Activated CD8-positive, alpha-beta memory T cell treated with anti-CD3 and anti-CD28 coated beads, Interleukin-2, amount 10 ng/mL, durations not matched to agents 7 days and 5 days (primary cell): ENCODE measurements at regions of chr1 and their contacts with region 1.

Region 1: DNA sequence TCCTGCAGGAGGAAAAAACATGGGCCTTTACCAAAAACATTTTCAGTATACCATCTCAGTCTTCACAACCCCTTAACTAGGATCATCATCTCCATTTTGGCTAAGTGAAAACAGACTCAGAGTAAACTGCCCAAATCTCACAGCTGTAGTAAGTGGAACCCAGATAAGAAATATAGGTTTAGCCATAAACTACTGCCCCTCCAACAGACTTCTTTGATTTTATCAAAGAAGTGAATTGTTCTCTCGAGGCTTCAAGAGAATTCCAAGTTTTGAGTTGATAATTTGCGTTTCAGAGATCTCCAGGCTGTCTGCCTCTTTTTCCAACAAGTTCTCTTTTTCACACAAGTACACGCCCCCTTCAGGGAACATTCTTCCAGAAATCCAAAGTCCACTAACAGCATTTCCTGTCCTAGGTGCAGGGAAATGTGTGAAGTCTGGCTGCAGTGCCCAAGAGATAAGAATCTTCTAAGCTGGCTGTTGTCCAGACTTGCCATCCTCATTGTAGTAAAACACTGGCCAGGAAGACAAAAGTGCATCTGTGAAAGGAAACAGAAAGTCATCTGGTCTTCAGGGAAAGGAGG is 30.8 kb downstream of the RNF19B start:
- DNase-seq: no peak
- ATAC-seq: no peak
- H3K4me3 Mint-ChIP-seq: no peak overlapping the region
- H3K27ac Mint-ChIP-seq: peak overlapping the region; percentile 32
- H3K4me1 Mint-ChIP-seq: peaks cover 34% of the 10 kb centered on the region
- H3K27me3 Mint-ChIP-seq: no peaks in the 10 kb centered on the region

Region 2: DNA sequence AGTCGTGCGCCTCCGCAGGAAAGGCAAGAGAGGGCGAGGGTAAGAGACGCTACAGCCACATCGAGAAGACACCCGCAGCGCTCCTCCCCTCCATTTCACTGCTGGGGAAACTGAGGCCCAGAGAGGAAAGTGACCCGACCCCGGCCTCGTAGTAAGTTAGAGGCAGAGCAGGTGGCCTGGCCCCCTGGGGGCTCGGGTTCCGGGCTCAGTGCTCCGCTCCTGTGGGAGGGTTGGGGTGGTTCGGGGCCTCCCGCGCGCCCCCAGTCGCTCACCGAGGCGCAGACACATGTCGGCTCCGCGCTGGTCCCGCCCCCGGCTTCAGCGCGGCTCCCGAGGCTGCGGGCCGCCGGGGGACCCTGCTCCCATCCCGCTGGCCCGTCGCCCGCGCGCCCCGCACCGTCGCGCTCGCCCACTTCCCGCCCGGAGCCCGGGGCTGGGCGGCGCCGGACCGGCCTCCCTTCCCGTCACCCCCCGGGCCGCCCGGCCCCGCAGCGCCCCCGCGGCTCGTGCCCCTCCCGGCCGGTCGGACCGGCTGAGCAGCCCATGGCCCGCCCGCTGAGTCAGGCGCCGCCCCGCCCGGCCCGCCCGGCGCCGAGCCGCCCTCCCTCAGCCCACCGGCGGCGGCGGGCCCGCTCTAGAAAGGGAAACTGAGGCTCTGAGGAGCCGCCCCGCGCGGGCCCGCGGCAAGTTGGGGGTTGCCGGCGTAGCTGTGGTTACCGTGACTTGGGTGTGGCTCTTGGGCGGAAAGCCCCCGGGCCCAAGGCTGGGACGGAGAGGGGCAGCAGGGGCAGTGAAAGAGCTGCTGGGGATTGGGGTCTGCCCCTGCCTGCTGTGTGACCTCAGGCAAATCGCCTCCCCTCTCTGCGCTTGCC is 32.6 kb before region 1 on chr1 and contains the start of gene TMEM54:
- CTCF ChIA-PET with region 1: no interaction called
- DNase-seq: no peak
- ATAC-seq: peak; percentile 64
- H3K4me3 Mint-ChIP-seq: peak within 1 kb of the TSS; percentile 39
- H3K27ac Mint-ChIP-seq: no peak within 1 kb of the TSS
- H3K4me1 Mint-ChIP-seq: peaks cover 8% of the 10 kb centered on the region
- H3K27me3 Mint-ChIP-seq: peaks cover 68% of the 10 kb centered on the region
- total RNA-seq, gene TMEM54: not detected

Region 3: DNA sequence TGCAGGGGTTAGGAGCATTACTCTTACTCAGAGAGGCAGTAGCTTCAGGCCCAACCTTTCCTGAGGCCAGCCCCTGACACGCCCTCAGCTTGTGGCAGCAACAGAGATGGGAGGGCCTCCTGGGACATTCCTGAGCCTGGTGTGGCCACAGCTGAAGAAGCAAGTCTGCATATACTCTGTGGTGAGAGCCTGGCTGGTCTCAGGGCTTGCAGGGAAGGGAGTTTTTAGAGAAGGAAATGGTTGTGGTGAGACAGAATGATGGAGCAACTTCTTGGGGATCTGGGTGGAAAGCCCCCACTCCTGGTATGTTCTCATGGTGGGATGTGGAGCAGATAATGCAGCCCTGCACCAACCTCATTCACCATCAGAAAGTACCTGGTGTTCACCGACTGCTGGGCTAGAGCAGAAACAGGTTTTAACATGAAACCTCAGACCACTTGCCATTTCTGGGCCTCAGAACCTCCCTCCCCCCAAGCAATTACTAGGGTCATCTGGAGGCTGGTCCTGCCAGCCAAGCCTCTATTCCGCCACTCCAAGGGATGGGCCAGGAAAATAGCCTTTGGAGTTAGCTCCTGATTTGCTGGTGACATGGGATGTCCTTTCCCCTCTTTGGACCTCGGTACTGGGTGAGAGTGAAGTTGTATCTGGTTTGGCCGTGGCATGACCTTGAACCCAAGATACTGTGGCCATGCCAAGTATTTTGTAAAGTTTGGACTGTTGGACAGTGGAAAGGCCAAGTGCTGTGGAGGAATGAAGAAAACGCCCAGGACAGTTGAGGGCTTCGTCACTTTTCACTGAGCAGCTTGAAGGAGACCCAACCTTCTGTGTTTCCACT is 58.9 kb after region 1 on chr1:
- CTCF ChIA-PET with region 1: interaction called, 15 read pairs
- DNase-seq: peak; percentile 85
- ATAC-seq: peak; percentile 73
- H3K4me3 Mint-ChIP-seq: no peak overlapping the region
- H3K27ac Mint-ChIP-seq: peak overlapping the region; percentile 85
- H3K4me1 Mint-ChIP-seq: peaks cover 57% of the 10 kb centered on the region
- H3K27me3 Mint-ChIP-seq: no peaks in the 10 kb centered on the region

Region 4: GRCh38 chr1:33007190-33008050 is 73.6 kb after region 1 on chr1:
- CTCF ChIA-PET with region 1: interaction called, 29 read pairs
- DNase-seq: no peak
- ATAC-seq: peak; percentile 55
- H3K4me3 Mint-ChIP-seq: no peak overlapping the region
- H3K27ac Mint-ChIP-seq: no peak overlapping the region
- H3K4me1 Mint-ChIP-seq: peaks cover 13% of the 10 kb centered on the region
- H3K27me3 Mint-ChIP-seq: no peaks in the 10 kb centered on the region

Region 5: DNA sequence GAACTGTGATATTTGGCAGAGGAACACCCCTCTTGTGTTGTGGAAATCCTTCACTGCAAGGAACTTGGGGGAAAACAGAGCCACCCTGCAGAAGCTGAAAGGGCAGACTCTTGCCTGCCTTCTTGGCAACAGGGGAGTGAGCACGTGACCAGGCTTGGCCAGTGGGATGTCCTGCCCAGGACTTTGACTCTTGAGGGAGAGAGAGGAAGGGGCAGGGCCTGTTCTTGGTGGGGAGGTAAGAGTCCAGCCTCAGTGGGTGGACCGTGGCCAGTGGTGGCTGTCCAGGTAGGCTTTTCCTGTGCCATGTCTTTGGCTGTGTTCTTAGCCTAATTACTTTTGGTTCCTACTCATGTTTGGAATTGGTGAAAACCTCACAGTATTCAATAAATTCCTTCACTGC is 111.4 kb after region 1 on chr1:
- CTCF ChIA-PET with region 1: interaction called, 11 read pairs
- DNase-seq: peak; percentile 47
- ATAC-seq: peak; percentile 48
- H3K4me3 Mint-ChIP-seq: no peak overlapping the region
- H3K27ac Mint-ChIP-seq: peak overlapping the region; percentile 70
- H3K4me1 Mint-ChIP-seq: peaks cover 29% of the 10 kb centered on the region
- H3K27me3 Mint-ChIP-seq: no peaks in the 10 kb centered on the region

Region 6: DNA sequence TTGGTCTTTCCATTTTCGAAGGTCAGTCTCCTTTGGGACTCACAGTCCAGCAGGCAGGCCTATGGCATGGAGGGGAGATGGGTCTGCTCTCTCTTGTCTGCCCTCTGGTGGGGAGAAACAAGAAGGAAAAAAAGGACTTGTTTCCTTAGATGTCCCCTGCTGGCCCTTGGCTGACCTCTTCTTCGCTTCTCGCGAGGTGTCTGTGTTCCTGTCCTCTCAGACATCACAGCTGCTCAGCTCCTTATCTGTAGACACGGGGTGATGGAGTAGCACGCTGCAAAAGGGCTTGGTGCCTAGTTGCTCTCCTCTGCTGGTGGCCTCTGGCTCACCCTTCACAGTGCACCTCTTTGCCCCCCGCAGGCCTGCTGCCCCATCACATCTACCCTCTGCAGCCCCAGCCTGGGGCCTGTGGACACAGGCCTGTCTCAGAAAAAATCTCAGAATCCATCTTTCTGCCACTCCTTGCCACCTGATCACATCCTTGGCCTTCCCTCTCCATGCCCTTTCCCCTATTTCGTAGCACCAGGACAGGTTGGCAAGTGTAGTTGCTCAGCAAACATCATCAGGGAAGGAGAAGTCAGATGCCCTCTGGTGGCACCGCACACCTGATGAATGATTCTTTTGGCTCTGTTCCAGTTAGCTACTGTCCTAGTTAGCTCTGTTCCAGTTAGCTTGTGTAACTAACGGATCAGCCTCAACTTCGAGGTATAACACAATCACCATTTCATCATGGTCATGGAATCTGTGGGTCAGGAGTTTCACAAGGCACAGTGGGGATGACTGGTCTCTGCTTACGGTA is 121.6 kb after region 1 on chr1:
- CTCF ChIA-PET with region 1: interaction called, 84 read pairs
- DNase-seq: peak; percentile 49
- ATAC-seq: peak; percentile 71
- H3K4me3 Mint-ChIP-seq: no peak overlapping the region
- H3K27ac Mint-ChIP-seq: no peak overlapping the region
- H3K4me1 Mint-ChIP-seq: peaks cover 5% of the 10 kb centered on the region
- H3K27me3 Mint-ChIP-seq: peaks cover 4% of the 10 kb centered on the region

Region 7: GRCh38 chr1:33086384-33086850 is 152.6 kb after region 1 on chr1:
- CTCF ChIA-PET with region 1: interaction called, 30 read pairs
- DNase-seq: peak; percentile 65
- ATAC-seq: no peak
- H3K4me3 Mint-ChIP-seq: no peak overlapping the region
- H3K27ac Mint-ChIP-seq: no peak overlapping the region
- H3K4me1 Mint-ChIP-seq: peaks cover 47% of the 10 kb centered on the region
- H3K27me3 Mint-ChIP-seq: peaks cover 9% of the 10 kb centered on the region